ENCODE measurements at regions of chr15 and their contacts with region 1.

Region 1: GRCh38 chr15:75625542-75626347 is at the start of gene SNUPN:
- DNase-seq: peak; percentile 76 to 87
- H3K4me3 ChIP-seq: peak within 1 kb of the TSS; percentile 69
- H3K27ac ChIP-seq: peak within 1 kb of the TSS; percentile 73
- H3K4me1 ChIP-seq: peaks cover 22% of the 10 kb centered on the region
- H3K27me3 ChIP-seq: no peaks in the 10 kb centered on the region
- CTCF ChIP-seq: no peak
- total RNA-seq, gene SNUPN: 37.6 and 40.0 TPM in 2 replicates

Region 2: GRCh38 chr15:75551081-75551480 is 74.7 kb before region 1 on chr15:
- CTCF ChIA-PET with region 1: no interaction called
- POLR2A ChIA-PET with region 1: no interaction called
- intact Hi-C with region 1: no loop called
- DNase-seq: no peak
- H3K4me3 ChIP-seq: no peak overlapping the region
- H3K27ac ChIP-seq: no peak overlapping the region
- H3K4me1 ChIP-seq: no peaks in the 10 kb centered on the region
- H3K27me3 ChIP-seq: no peaks in the 10 kb centered on the region
- CTCF ChIP-seq: no peak

Region 3: DNA sequence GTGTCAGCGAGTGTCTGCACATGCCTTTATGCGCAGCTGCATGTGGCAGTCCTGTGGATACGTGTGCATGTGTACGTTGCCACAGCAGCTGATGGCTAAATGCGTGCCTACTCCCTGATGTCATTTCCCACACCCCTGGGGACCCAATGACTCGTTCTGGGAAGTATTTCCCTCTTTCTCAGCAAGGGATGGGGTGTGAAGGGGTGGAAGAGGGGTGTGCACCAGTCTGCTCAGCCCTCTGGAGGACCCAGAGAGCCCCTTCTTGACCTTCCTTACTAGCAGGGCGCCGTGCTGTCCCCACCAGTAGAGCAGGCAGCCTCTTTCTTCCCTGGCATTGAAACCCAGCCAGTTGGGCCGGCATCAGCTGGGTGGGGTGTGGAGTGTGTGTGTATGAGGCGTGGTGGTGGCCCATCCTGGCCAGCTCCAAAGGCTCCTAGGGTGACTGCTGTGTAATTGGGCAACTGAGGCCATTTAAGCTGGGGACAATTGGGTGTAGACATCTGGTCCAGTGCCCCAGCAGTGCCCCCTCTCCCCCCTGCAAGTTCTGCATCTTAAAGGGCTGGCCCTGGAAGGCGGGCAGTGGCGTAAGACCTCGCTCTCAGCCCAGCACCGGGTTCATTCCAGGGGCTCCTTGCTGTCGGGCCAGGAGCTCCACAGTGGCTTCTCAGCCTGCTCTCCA is 41.2 kb after region 1 on chr15:
- CTCF ChIA-PET with region 1: no interaction called
- POLR2A ChIA-PET with region 1: interaction called, 7 read pairs
- intact Hi-C with region 1: loop called (anchors 2 kb)
- DNase-seq: peak; percentile 89 to 98
- H3K4me3 ChIP-seq: no peak overlapping the region; the same call in 1 of the 2 replicates
- H3K27ac ChIP-seq: peak overlapping the region; percentile 99
- H3K4me1 ChIP-seq: peaks cover 100% of the 10 kb centered on the region
- H3K27me3 ChIP-seq: no peaks in the 10 kb centered on the region
- CTCF ChIP-seq: no peak

Region 4: GRCh38 chr15:76180321-76180720 is 554.6 kb after region 1 on chr15:
- CTCF ChIA-PET with region 1: no interaction called
- POLR2A ChIA-PET with region 1: interaction called, 10 read pairs
- intact Hi-C with region 1: no loop called
- DNase-seq: no peak
- H3K4me3 ChIP-seq: no peak overlapping the region
- H3K27ac ChIP-seq: no peak overlapping the region
- H3K4me1 ChIP-seq: peaks cover 9% of the 10 kb centered on the region
- H3K27me3 ChIP-seq: no peaks in the 10 kb centered on the region
- CTCF ChIP-seq: no peak

Measured in PC-9 (cell line).